A549 (cell line): ENCODE measurements at regions of chr12 and their contacts with region 1.

Region 1: DNA sequence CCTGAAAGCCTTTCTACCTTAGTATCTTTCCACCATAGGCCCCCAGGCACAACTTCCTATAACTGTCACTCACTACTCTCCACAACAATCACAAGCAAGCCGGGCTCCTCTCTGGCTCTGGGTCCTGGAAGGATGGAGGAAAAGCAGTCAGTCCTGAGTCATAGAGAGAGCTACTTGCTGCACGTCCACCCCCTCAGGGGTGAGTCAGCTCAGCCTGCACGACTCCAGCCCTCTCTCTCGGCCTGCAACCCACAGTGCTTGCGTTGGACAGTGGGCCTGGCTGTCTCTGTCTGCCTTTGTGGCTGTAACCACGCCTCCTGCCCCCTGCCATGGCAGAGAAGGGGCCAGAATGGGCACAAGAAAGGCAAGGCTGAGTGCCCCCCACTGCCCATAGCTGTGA is 154.1 kb upstream of the FKBP4 start:
- DNase-seq: peak; percentile 72 to 76
- ATAC-seq: peak; percentile 98
- H3K4me3 ChIP-seq: no peak overlapping the region
- H3K27ac ChIP-seq: peak overlapping the region; percentile 21 to 80; a peak in 4 of 6 replicates
- H3K4me1 ChIP-seq: peaks cover 14% of the 10 kb centered on the region
- CTCF ChIP-seq: no peak
- EP300 ChIP-seq: no peak
- POLR2A ChIP-seq: no peak
- RAD21 ChIP-seq: no peak

Region 2: DNA sequence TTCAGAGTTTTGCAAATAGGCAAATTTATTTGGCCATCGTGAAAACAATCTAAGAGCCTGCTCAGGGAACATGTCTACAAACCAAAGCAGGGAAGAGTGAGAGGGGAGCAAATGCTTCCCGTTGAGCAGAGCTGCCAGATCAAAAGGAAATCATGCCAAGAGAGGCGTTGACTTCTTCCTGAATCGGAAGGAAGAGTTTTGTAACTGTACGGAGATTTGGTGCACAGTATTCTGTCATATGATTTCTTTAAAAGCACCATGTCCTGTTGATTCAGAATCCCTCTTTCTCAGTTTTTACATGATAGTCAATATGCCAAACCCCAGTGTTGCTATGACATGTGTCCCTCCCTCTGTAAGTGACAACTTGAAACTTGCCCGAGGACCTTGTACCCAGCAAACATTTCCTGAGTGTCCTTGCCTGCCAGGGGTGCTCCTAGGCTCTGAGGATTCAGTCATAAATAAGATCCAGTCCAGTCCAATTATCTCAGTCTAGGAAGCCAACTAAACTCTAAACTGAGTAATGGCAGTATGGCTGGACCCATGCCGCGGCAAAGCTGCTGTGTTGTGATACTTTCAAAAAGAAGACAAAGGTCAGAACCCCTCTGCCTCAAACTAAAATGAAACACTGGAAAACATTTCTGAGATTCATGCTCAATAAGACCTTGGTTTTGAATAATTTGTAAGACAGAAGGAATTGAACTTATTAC is 146.1 kb before region 1 on chr12:
- CTCF ChIA-PET with region 1: no interaction called
- POLR2A ChIA-PET with region 1: no interaction called
- DNase-seq: no peak
- ATAC-seq: no peak
- H3K4me3 ChIP-seq: no peak overlapping the region
- H3K27ac ChIP-seq: no peak overlapping the region
- H3K4me1 ChIP-seq: no peaks in the 10 kb centered on the region
- CTCF ChIP-seq: no peak
- EP300 ChIP-seq: no peak
- POLR2A ChIP-seq: no peak
- RAD21 ChIP-seq: no peak

Region 3: DNA sequence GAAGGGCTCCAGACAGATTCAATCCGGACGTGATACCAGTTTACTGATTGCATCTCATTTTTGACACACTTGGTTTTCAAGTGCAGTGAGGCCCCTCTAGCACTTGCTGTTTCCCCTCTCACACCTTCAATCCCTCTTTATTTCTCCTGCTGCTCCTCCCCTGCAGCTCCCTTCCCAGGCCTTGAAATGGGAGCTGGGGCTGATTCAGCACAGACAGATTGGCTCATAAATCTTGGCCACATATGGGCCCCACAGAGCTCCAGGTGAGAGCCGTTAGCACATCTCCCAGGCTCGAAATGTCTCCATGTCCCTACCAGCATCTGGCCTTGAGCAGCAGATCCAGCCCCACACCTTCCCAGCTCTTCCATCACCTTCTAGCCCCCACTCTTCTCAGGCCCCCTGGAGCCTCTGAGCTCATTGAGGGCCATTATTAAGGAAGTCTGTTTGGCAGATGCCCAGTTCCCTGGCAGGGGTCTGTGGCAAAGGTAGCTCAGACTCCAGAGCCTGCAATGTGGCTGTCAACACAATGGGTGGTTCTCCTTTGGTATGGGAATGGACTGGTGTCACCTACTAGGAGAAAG is 66.3 kb before region 1 on chr12:
- CTCF ChIA-PET with region 1: no interaction called
- POLR2A ChIA-PET with region 1: no interaction called
- DNase-seq: no peak
- ATAC-seq: no peak
- H3K4me3 ChIP-seq: no peak overlapping the region
- H3K27ac ChIP-seq: no peak overlapping the region
- H3K4me1 ChIP-seq: no peaks in the 10 kb centered on the region
- CTCF ChIP-seq: no peak
- EP300 ChIP-seq: no peak
- POLR2A ChIP-seq: no peak
- RAD21 ChIP-seq: no peak

Region 4: GRCh38 chr12:2589385-2589784 is 51.3 kb before region 1 on chr12:
- CTCF ChIA-PET with region 1: no interaction called
- POLR2A ChIA-PET with region 1: no interaction called
- DNase-seq: no peak
- ATAC-seq: no peak
- H3K4me3 ChIP-seq: no peak overlapping the region
- H3K27ac ChIP-seq: no peak overlapping the region
- H3K4me1 ChIP-seq: no peaks in the 10 kb centered on the region
- CTCF ChIP-seq: no peak
- EP300 ChIP-seq: no peak
- POLR2A ChIP-seq: no peak
- RAD21 ChIP-seq: no peak

Region 5: DNA sequence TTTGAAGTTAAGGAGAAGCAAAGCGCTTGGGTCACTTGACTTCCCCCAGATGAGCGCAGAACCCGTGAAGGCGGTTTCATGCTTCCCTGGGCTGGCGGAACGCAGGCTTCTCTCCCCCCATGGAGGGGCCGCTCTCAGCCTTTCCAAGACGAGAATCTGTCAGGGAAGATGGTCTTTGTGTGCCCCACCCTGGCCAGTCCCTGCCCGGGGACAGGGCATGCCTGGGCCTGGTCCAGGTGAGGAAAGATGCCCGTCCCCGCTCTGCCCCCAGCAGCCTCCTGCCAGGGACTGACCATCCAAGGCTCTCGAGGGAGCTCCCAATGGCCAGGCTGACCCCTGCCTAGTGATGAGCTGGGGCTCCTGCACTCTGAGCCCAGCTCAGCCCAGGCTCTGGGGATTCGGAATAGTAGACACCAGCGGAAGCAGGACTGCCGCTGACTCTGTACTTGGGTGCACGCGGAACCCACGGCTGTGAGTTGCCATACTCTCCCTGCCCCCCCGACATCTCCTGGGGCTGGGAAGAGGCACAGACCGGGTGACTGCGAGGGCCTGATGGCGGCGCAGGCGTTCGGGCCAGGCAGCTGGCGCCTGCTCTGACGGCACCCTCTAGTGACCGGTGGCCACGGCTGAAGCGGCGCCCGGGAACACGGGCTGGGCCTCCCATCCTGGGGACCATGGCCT is 11.8 kb after region 1 on chr12:
- CTCF ChIA-PET with region 1: interaction called, 19 read pairs
- POLR2A ChIA-PET with region 1: no interaction called
- DNase-seq: peak in 1 of 2 experiments; percentile 20
- ATAC-seq: peak; percentile 59 to 82; a peak in 4 of 6 replicates
- H3K4me3 ChIP-seq: no peak overlapping the region
- H3K27ac ChIP-seq: no peak overlapping the region
- H3K4me1 ChIP-seq: no peaks in the 10 kb centered on the region
- CTCF ChIP-seq: peak; percentile 27; the same call in 1 of the 3 replicates
- EP300 ChIP-seq: no peak
- POLR2A ChIP-seq: no peak
- RAD21 ChIP-seq: peak; percentile 45 to 51

Region 6: GRCh38 chr12:2682296-2683251 is 41.9 kb after region 1 on chr12:
- CTCF ChIA-PET with region 1: interaction called, 10 read pairs
- POLR2A ChIA-PET with region 1: no interaction called
- DNase-seq: peak; percentile 19 to 68
- ATAC-seq: peak; percentile 57 to 82
- H3K4me3 ChIP-seq: no peak overlapping the region
- H3K27ac ChIP-seq: no peak overlapping the region
- H3K4me1 ChIP-seq: no peaks in the 10 kb centered on the region
- CTCF ChIP-seq: peak; percentile 30
- EP300 ChIP-seq: no peak
- POLR2A ChIP-seq: no peak
- RAD21 ChIP-seq: peak; percentile 26 to 56; a peak in 4 of 5 replicates